Calu3 (cell line): ENCODE measurements at regions of chr5 and their contacts with region 1.

Region 1: GRCh38 chr5:114449860-114450421 is 88.1 kb downstream of the KCNN2 start:
- DNase-seq: peak; percentile 78
- H3K4me3 Mint-ChIP-seq: no peak overlapping the region
- H3K27ac Mint-ChIP-seq: no peak overlapping the region
- H3K4me1 Mint-ChIP-seq: no peaks in the 10 kb centered on the region
- H3K27me3 Mint-ChIP-seq: peaks cover 56% of the 10 kb centered on the region
- CTCF ChIP-seq: peak; percentile 82

Region 2: GRCh38 chr5:113612060-113612496 is 837.9 kb before region 1 on chr5:
- CTCF ChIA-PET with region 1: interaction called, 16 read pairs
- intact Hi-C with region 1: loop called (anchors 1 kb)
- DNase-seq: no peak
- H3K4me3 Mint-ChIP-seq: no peak overlapping the region
- H3K27ac Mint-ChIP-seq: no peak overlapping the region
- H3K4me1 Mint-ChIP-seq: no peaks in the 10 kb centered on the region
- H3K27me3 Mint-ChIP-seq: peaks cover 36% of the 10 kb centered on the region
- CTCF ChIP-seq: peak; percentile 35

Region 3: DNA sequence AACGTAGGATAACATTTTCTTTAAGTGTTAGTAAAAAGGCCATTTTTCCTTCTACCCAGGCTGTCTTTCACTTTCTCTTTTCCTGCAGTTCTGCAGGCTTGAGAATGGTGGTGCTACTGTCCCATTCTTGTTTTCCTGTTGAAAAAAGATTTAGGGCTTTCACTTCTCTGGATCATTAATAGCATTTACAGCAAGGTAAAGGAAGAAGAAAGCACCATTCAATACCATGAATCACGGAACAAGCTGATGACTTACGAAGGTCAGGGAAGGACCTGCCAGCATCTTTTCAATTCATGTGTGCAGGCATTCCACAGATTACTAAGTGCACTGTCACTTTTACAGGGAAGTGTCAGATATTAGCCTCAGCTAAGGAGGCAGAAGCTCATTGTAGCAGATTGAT is 643.7 kb before region 1 on chr5:
- CTCF ChIA-PET with region 1: no interaction called
- intact Hi-C with region 1: loop called (anchors 1 kb)
- DNase-seq: peak; percentile 22
- H3K4me3 Mint-ChIP-seq: peak overlapping the region; percentile 25
- H3K27ac Mint-ChIP-seq: no peak overlapping the region
- H3K4me1 Mint-ChIP-seq: peaks cover 17% of the 10 kb centered on the region
- H3K27me3 Mint-ChIP-seq: no peaks in the 10 kb centered on the region
- CTCF ChIP-seq: peak; percentile 33

Region 4: DNA sequence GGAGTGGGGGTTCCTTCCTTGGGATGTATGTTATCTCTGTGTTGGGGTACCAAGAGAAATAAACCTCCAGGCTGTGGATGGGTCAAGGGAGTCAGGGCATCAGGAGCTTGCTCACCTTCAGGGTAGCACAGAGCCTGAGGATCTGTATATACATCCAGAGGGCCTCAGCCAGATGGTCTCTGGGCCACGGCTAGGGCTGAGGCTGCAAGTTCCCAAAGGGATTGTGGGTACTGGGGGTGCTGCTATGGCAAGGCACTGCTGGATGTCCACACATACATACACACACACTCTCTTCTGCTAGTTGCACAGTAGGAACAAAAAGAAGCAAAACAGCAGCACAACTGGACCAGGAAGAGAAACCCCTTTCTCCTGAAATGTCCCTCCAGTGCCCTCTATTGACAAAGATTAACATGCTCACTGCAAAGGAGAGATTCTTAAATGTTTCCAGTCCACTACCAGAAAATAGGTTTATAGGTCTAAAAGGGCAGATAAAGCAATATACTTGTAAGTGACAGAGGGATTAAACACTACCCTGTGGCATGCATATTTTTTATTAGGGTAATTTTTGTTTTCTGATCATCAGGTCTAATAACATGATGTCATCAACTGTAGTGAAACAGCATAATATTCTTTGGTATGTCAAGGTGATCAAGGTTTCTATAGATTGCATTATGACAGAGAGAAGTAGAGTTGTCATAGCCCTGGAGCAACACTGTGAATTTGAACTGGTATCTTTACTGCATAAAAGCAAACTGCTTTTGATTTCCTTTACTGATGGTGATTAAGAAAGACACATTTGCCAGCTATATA is 144.3 kb before region 1 on chr5:
- CTCF ChIA-PET with region 1: no interaction called
- intact Hi-C with region 1: loop called (anchors 5 kb)
- DNase-seq: peak; percentile 17
- H3K4me3 Mint-ChIP-seq: no peak overlapping the region
- H3K27ac Mint-ChIP-seq: no peak overlapping the region
- H3K4me1 Mint-ChIP-seq: no peaks in the 10 kb centered on the region
- H3K27me3 Mint-ChIP-seq: peaks cover 14% of the 10 kb centered on the region
- CTCF ChIP-seq: peak; percentile 38

Region 5: DNA sequence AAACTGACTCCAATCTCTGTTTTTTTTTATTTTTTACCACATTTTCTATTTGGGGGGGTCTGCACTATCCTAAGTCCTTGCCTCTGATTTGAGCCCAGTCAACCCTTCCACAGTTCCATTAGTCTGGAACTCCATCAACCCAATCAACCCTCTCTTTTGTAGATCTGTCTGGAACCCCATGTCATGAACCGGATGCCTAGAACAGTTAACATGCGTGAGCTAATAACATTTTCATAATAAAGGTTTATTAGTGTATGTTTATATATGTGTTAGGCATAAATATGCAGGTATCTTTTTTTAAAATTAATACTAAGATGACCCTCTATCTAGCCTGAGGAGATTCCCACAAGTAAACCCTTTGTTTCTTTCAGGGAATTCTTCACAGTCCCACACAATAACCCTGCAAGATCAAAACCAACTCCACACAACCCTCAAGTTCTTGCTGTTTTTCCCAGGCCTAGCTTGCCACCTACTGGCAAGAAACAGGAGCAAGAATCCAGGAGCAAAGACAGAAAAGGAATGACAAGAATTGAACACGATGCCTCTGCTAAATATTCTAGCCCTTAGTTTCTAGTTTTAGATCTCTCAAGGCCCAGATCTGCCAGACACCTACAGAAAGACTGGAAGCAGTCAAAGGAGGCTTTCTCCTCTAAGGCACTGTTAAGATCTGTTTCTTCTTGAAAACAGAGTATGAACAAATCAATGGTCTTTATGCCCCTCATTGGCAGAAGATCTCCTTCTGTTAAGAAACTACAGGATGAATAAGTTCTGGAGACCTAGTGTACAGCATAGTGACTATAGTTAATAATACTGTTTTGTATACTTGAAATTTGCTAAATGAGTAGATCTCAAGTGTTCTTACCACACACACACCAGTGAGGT is 619.4 kb after region 1 on chr5:
- CTCF ChIA-PET with region 1: no interaction called
- intact Hi-C with region 1: loop called (anchors 1 kb)
- DNase-seq: peak; percentile 51
- H3K4me3 Mint-ChIP-seq: no peak overlapping the region
- H3K27ac Mint-ChIP-seq: no peak overlapping the region
- H3K4me1 Mint-ChIP-seq: peaks cover 7% of the 10 kb centered on the region
- H3K27me3 Mint-ChIP-seq: no peaks in the 10 kb centered on the region
- CTCF ChIP-seq: no peak